Mucosa of descending colon (tissue), 3 donors: ENCODE measurements at regions of chr7 and their contacts with region 1.

Region 1: DNA sequence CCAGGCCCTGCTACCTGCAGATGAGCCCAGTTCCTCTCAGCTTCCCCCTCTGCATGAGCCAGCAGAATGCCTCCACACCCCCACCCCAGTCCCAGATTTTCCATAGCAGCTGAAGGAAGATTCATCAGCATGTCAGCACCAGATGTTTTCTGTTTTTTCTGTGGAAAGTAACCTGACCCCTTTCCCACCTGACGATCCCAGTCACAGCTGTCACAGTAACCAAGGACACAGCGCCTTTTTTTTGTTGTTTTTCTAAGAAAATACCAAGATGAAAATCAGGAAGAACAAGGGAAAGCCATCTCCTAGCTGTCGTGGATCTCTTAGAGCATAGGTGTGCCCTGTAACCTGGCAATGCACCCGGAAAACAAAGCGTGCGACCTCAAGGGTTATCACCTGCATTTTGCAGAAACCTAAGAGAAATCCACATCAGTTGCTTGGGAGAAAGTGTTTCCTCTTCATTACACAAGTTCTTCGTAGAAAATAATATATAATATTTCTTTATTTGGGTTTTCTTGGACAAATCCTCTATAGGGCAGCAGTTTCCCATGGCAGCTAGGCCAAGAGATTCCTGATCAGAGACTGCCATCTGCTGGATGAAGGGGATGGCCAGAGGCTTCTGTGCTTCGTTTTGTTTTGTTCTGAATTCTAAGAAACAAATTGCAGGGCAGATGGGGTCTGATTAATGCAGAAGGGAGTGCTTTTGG is 401.9 kb downstream of the TNS3 start:
- DNase-seq: peak in 1 of 3 donors; percentile 81
- ATAC-seq: peak; percentile 66
- H3K4me3 ChIP-seq: no peak overlapping the region
- H3K4me1 ChIP-seq: no peaks in the 10 kb centered on the region
- CTCF ChIP-seq: peak; percentile 69

Region 2: GRCh38 chr7:45917658-45918057 is 1262.3 kb before region 1 on chr7:
- intact Hi-C with region 1: loop called (anchors 5 to 10 kb)
- DNase-seq: peak; percentile 59 to 84 (median 81)
- ATAC-seq: peak; percentile 63
- H3K4me3 ChIP-seq: no peak overlapping the region
- H3K4me1 ChIP-seq: no peaks in the 10 kb centered on the region
- CTCF ChIP-seq: peak; percentile 87

Region 3: DNA sequence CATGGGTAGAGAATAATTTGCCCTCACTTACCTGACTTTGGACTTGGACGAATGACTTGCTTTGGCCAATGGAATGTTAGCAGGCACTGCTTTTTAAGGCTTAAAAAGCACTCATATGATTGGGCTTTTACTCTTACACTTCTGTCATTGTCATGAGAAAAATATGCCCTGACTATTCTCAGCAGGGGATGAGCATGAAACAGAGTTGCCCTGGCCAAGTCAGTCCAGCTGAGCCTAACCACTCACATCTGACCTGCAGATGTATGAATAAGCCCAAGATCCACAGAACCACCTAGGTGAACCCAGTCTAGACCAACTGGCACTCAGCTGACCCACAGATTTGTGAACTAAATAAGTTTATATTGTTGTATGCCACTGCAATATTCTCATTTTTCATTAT is 171.5 kb before region 1 on chr7:
- intact Hi-C with region 1: no loop called
- DNase-seq: no peak
- ATAC-seq: no peak
- H3K4me3 ChIP-seq: no peak overlapping the region
- H3K4me1 ChIP-seq: no peaks in the 10 kb centered on the region
- CTCF ChIP-seq: no peak

Region 4: GRCh38 chr7:47314728-47315607 is 135.0 kb after region 1 on chr7:
- intact Hi-C with region 1: no loop called
- DNase-seq: no peak
- ATAC-seq: peak; percentile 16
- H3K4me3 ChIP-seq: no peak overlapping the region
- H3K4me1 ChIP-seq: no peaks in the 10 kb centered on the region
- CTCF ChIP-seq: no peak

Region 5: DNA sequence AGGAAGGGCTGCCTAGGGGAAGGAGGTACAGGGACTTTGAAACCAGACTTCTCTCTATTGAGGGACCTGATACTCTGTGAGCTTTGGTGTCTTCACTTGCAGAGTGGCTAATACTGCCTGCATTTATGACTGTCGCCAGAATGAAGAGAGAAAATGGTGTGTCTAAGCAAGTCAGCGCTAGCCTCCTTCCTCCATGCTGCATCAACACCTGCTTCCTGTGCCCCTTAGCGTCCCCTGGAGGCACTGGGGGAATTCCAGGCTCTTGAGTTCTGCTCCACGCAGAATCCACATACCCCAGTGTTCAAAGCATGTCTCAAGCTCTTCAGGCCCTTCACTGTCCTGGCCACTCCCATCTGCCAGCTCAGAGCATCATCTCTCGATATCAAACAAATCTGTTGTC is 627.8 kb after region 1 on chr7:
- intact Hi-C with region 1: no loop called
- DNase-seq: no peak
- ATAC-seq: peak; percentile 22
- H3K4me3 ChIP-seq: no peak overlapping the region
- H3K4me1 ChIP-seq: no peaks in the 10 kb centered on the region
- CTCF ChIP-seq: no peak